H1 (cell line): ENCODE measurements at regions of chr7 and their contacts with region 1.

Region 1: DNA sequence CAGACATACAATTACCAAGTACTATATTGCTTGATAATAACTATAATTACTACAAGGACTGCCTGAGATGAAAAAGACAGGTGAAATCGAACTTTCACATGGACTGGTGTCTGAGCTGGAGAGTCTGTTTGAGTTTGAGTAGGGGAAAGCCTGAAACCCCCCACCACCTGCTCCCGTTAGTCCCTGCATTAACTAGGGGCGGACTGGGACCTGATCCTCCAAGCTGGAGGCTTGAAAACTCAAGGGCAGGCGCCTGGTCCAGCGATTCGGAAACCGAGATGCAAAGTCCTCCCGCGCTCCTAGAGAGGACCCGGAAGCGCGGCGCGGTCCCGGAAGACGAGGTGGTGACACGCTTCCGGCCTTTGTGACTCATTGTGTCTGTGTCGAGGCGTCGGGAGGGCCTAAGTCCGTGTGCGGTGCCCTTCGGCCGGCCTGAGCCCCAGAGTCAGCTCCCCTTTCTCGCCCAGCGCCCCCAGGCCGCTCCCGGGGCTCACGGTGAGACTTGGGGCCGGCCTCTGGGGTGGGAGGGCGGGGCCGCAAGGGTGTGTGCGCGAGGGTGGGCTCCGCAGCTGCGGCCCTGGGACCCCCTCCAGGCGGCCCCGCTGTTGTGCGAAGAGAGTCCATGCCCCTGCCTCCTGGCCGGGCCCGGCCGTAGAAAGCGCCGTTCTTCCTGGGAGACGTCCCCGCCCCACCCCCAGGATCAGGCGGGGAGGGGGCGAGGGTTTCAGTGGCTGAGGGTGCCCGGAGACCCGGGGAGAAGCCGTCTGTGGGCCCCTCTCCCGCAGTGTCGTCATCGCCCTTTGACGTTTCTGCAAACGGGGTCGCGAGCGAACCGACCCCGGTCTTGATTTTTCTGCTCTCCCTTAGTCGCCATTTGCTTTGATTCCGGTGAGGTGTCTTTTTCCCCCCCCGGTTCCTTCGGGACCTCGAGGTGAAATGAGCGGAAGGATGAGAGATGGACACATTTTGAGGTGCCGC is at the start of gene ZKSCAN1:
- DNase-seq: peak; percentile 80 to 84
- H3K4me3 ChIP-seq: peak within 1 kb of the TSS; percentile 91 to 99 (median 95)
- H3K27ac ChIP-seq: peak within 1 kb of the TSS; percentile 81
- H3K4me1 ChIP-seq: peaks cover 0 to 4% (median 1%) of the 10 kb centered on the region in 4 experiments; a peak in 3 of 7 replicates
- H3K27me3 ChIP-seq: no peaks in the 10 kb centered on the region
- CTCF ChIP-seq: no peak
- EP300 ChIP-seq: 0 out of 3 replicates have a peak, but pooled peaks of 1 of the 2 experiments have one; percentile 49
- POLR2A ChIP-seq: peak; percentile 96 to 97
- RAD21 ChIP-seq: no peak; a peak in 1 of 4 replicates
- total RNA-seq, gene ZKSCAN1: 37.7 and 40.6 TPM in 2 replicates

Region 2: DNA sequence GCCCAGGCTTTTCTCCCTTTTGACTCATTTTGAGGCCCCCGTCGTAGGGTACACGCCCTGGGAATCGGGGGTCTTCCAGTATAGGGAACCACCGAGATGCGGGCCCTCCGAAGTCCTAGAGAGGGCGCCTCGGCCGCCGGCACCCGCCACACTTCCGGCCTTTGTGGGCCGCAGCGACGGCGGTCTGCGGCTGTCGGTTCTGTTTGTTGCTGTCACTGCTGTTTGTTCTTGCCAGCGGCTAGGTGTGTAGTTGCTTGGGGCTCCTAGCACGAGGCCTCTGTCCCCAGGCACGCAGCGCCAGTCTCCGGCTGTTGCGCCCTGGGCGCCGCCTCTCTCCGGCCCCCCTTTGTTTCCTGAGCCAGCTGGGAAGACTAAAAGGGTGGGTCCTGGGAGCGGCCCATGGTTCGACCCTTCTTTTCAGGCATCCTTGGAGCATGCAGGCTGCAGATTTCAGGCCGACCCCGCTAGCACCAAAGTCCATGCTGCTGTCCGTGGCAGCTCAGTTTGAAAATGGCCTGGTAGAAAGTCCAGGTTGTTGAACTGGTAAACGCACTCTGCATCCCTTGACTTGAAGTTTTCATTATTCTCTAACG is 17.9 kb before region 1 on chr7:
- CTCF ChIA-PET with region 1: interaction called, 99 read pairs
- POLR2A ChIA-PET with region 1: interaction called, 47 read pairs
- DNase-seq: peak in 1 of 2 experiments; percentile 82
- H3K4me3 ChIP-seq: peak overlapping the region; percentile 52 to 79 (median 60)
- H3K27ac ChIP-seq: peak overlapping the region; percentile 61
- H3K4me1 ChIP-seq: peaks cover 0 to 4% (median 1%) of the 10 kb centered on the region in 4 experiments; a peak in 2 of 7 replicates
- H3K27me3 ChIP-seq: no peaks in the 10 kb centered on the region; a peak in 2 of 7 replicates
- CTCF ChIP-seq: peak in 2 of 3 experiments; percentile 16 to 24; a peak in 3 of 4 replicates
- EP300 ChIP-seq: no peak
- POLR2A ChIP-seq: peak; percentile 76 to 87
- RAD21 ChIP-seq: no peak

Region 3: GRCh38 chr7:100003711-100004661 is 11.5 kb before region 1 on chr7:
- CTCF ChIA-PET with region 1: interaction called, 3 read pairs
- POLR2A ChIA-PET with region 1: interaction called, 10 read pairs
- DNase-seq: no peak
- H3K4me3 ChIP-seq: no peak overlapping the region
- H3K27ac ChIP-seq: no peak overlapping the region
- H3K4me1 ChIP-seq: peaks cover 0 to 2% (median 0%) of the 10 kb centered on the region in 4 experiments; a peak in 2 of 7 replicates
- H3K27me3 ChIP-seq: no peaks in the 10 kb centered on the region
- CTCF ChIP-seq: no peak
- EP300 ChIP-seq: no peak
- POLR2A ChIP-seq: no peak
- RAD21 ChIP-seq: no peak

Region 4: DNA sequence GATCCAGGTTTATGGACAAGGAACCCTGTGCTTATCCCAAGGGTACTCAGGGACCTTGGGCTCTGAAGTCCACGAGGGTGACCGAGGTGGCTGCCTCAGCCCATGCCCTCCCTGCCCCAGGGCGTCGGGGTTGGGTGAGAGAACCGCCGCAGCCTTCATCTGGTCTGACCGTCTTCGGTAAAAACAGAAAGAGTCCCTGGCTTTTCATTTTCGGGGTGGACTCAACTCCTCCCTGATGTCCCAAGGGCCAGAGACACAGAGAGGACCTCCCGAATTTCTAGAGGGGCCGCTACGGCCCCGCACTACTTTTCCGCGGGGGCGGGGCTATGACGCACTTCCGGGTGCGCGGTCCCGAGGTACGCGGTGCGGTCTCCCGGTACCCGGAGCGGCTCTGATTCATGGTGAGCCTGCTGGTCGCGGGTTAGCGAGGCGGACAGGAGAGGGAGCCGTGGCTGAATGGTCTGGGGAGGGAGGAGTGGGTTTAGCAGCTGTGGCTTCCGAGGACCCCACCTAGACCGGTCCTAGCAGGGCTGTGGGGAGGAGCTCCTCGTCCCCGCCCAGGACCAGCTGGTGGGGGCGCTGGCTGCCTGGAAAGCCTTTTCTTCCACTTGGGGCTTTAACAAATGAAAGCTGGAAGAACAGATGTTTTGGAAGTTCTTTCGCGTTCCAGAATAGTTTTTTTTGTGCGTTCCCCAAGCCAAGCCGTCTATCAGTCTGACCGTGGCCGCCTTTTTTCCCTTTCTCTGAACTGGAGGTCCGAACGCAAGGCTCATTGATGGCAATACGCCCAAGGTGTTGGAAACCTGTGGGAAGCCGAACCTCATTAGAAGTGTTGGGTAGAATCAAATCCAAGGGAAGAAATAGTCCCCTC is 34.2 kb after region 1 on chr7 and contains the start of gene ZSCAN21:
- CTCF ChIA-PET with region 1: interaction called, 8 read pairs
- POLR2A ChIA-PET with region 1: interaction called, 13 read pairs
- DNase-seq: peak; percentile 34 to 95
- H3K4me3 ChIP-seq: peak within 1 kb of the TSS; percentile 79 to 98 (median 86)
- H3K27ac ChIP-seq: peak within 1 kb of the TSS; percentile 86
- H3K4me1 ChIP-seq: peaks cover 0 to 3% (median 0%) of the 10 kb centered on the region in 4 experiments; a peak in 3 of 7 replicates
- H3K27me3 ChIP-seq: peaks cover 0 to 1% (median 0%) of the 10 kb centered on the region in 4 experiments; a peak in 1 of 7 replicates
- CTCF ChIP-seq: peak in 1 of 3 experiments; percentile 7; a peak in 1 of 4 replicates
- EP300 ChIP-seq: no peak
- POLR2A ChIP-seq: peak; percentile 84 to 94
- RAD21 ChIP-seq: no peak
- total RNA-seq, gene ZSCAN21: 25.4 and 26.1 TPM in 2 replicates

Region 5: GRCh38 chr7:100538348-100538653 is 522.8 kb after region 1 on chr7:
- CTCF ChIA-PET with region 1: no interaction called
- POLR2A ChIA-PET with region 1: no interaction called
- DNase-seq: no peak
- H3K4me3 ChIP-seq: peak overlapping the region; percentile 41 to 60 (median 50); a peak in 7 of 8 replicates
- H3K27ac ChIP-seq: no peak overlapping the region
- H3K4me1 ChIP-seq: peaks cover 3 to 19% (median 13%) of the 10 kb centered on the region in 4 experiments; a peak in 4 of 7 replicates
- H3K27me3 ChIP-seq: peaks cover 0 to 3% (median 2%) of the 10 kb centered on the region in 4 experiments; a peak in 3 of 7 replicates
- CTCF ChIP-seq: no peak
- EP300 ChIP-seq: no peak
- POLR2A ChIP-seq: no peak
- RAD21 ChIP-seq: no peak